H1 (cell line): ENCODE measurements at regions of chr3 and their contacts with region 1.

Region 1: GRCh38 chr3:40505599-40506462 is at the start of gene ZNF620:
- DNase-seq: peak; percentile 75 to 90
- H3K4me3 ChIP-seq: peak within 1 kb of the TSS; percentile 83 to 95 (median 88)
- H3K27ac ChIP-seq: peak within 1 kb of the TSS; percentile 73; the same call in 1 of the 2 replicates
- H3K4me1 ChIP-seq: no peaks in the 10 kb centered on the region; a peak in 2 of 7 replicates
- H3K27me3 ChIP-seq: no peaks in the 10 kb centered on the region
- CTCF ChIP-seq: peak; percentile 32 to 47 (median 45)
- EP300 ChIP-seq: 0 out of 3 replicates have a peak, but pooled peaks of 1 of the 2 experiments have one; percentile 50
- POLR2A ChIP-seq: peak; percentile 46 to 77; a peak in 2 of 3 replicates
- RAD21 ChIP-seq: peak; percentile 45 to 52
- total RNA-seq, gene ZNF620: 20.2 and 21.4 TPM in 2 replicates

Region 2: GRCh38 chr3:40329071-40329470 is 176.8 kb before region 1 on chr3:
- CTCF ChIA-PET with region 1: interaction called, 10 read pairs
- POLR2A ChIA-PET with region 1: interaction called, 4 read pairs
- DNase-seq: no peak
- H3K4me3 ChIP-seq: no peak overlapping the region
- H3K27ac ChIP-seq: no peak overlapping the region
- H3K4me1 ChIP-seq: peaks cover 0 to 16% (median 5%) of the 10 kb centered on the region in 4 experiments; a peak in 6 of 7 replicates
- H3K27me3 ChIP-seq: no peaks in the 10 kb centered on the region
- CTCF ChIP-seq: no peak
- EP300 ChIP-seq: no peak
- POLR2A ChIP-seq: no peak
- RAD21 ChIP-seq: no peak

Region 3: DNA sequence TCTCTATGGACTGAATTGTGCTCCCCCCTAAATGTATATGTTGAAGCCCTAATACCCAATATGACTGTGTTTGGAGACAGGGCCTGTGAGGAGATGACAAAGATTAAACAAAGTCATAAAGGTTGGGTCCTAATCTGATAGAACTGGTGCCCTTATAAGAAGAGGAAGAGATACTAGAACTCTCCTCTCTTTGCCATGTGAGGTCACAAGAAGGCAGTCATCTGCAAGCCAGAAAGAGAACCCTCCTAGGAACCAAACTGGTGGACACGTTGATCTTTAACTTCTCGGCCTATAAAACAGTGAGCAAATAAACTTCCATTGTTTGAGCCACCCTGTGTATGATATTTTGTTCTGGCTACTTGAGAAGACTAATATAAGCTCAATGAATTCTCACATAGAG is 150.4 kb before region 1 on chr3:
- CTCF ChIA-PET with region 1: no interaction called
- POLR2A ChIA-PET with region 1: no interaction called
- DNase-seq: no peak
- H3K4me3 ChIP-seq: no peak overlapping the region
- H3K27ac ChIP-seq: no peak overlapping the region
- H3K4me1 ChIP-seq: no peaks in the 10 kb centered on the region
- H3K27me3 ChIP-seq: peaks cover 0 to 1% (median 0%) of the 10 kb centered on the region in 4 experiments; a peak in 1 of 7 replicates
- CTCF ChIP-seq: no peak
- EP300 ChIP-seq: no peak
- POLR2A ChIP-seq: no peak
- RAD21 ChIP-seq: no peak

Region 4: GRCh38 chr3:40445062-40445461 is 60.8 kb before region 1 on chr3:
- CTCF ChIA-PET with region 1: no interaction called
- POLR2A ChIA-PET with region 1: no interaction called
- DNase-seq: no peak
- H3K4me3 ChIP-seq: no peak overlapping the region
- H3K27ac ChIP-seq: no peak overlapping the region
- H3K4me1 ChIP-seq: no peaks in the 10 kb centered on the region
- H3K27me3 ChIP-seq: no peaks in the 10 kb centered on the region
- CTCF ChIP-seq: no peak
- EP300 ChIP-seq: no peak
- POLR2A ChIP-seq: no peak
- RAD21 ChIP-seq: no peak

Region 5: DNA sequence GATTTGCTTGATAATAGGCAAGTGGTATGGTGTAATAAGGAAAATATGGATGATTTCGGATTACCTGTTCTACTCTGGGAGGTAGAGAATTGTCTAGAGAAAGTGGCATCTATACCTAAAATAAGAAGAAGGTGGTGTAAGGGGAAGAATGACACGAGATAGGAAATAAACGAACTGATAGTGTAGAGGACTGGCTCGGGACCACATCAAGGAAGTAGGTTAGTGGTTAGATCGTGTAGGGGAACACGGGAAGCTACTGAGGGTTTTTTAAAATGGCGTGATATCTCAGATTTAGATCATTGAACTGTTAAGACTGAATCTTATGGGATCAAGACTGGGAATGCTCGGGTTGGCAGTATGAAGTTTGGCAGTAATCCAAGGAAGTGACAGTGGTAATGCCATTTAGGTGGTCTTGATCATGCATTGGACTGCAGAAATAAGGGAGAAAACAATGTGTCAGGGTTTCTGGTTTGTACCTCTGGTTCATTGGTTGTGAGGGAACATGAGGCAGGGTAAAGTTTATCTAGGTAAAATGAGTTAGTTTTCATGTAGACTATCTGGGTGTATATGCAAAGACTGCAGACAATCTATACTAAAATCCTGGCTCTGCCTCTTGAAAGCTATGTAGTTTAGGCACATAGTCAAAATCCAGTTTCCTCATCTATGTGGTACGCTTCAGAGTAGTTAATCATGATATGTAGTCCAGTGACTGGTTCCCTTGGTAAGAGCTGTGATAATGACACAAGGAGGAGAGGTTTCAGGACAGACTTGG is 41.3 kb before region 1 on chr3:
- CTCF ChIA-PET with region 1: no interaction called
- POLR2A ChIA-PET with region 1: interaction called, 23 read pairs
- DNase-seq: no peak
- H3K4me3 ChIP-seq: no peak overlapping the region
- H3K27ac ChIP-seq: no peak overlapping the region
- H3K4me1 ChIP-seq: no peaks in the 10 kb centered on the region
- H3K27me3 ChIP-seq: no peaks in the 10 kb centered on the region
- CTCF ChIP-seq: no peak
- EP300 ChIP-seq: no peak
- POLR2A ChIP-seq: no peak; a peak in 2 of 3 replicates
- RAD21 ChIP-seq: no peak

Region 6: GRCh38 chr3:40476478-40477470 is 29.1 kb before region 1 on chr3 and contains the start of gene ZNF619:
- CTCF ChIA-PET with region 1: interaction called, 5 read pairs
- POLR2A ChIA-PET with region 1: interaction called, 11 read pairs
- DNase-seq: peak in 1 of 2 experiments; percentile 80
- H3K4me3 ChIP-seq: peak within 1 kb of the TSS; percentile 36 to 88 (median 64)
- H3K27ac ChIP-seq: peak within 1 kb of the TSS; percentile 67; the same call in 1 of the 2 replicates
- H3K4me1 ChIP-seq: peaks cover 0 to 8% (median 3%) of the 10 kb centered on the region in 4 experiments; a peak in 2 of 7 replicates
- H3K27me3 ChIP-seq: no peaks in the 10 kb centered on the region
- CTCF ChIP-seq: no peak
- EP300 ChIP-seq: no peak
- POLR2A ChIP-seq: peak in 1 of 2 experiments; percentile 60; a peak in 2 of 3 replicates
- RAD21 ChIP-seq: no peak
- total RNA-seq, gene ZNF619: 7.0 and 8.2 TPM in 2 replicates

Region 7: DNA sequence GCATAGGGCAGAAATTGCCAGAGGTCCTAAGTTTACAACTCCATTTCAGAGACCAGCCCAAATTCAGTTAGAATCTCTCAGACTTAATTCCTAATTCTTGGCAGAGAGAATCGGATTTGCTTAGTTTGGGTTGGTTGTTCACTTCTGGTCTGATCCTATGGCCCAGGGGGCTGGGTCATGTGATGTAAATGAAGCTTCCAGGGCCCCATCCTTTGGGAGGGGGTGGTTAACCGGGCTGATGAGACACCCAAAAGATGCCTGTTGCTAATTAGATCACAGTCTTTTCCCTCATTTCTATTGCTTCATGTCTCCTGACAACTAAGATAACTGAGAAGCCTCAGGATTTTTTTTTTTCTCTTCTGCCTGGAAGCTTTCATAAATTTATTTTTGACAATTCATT is 11.1 kb before region 1 on chr3:
- CTCF ChIA-PET with region 1: interaction called, 17 read pairs
- POLR2A ChIA-PET with region 1: interaction called, 16 read pairs
- DNase-seq: no peak
- H3K4me3 ChIP-seq: no peak overlapping the region
- H3K27ac ChIP-seq: no peak overlapping the region
- H3K4me1 ChIP-seq: no peaks in the 10 kb centered on the region
- H3K27me3 ChIP-seq: peaks cover 0 to 2% (median 0%) of the 10 kb centered on the region in 4 experiments; a peak in 1 of 7 replicates
- CTCF ChIP-seq: no peak
- EP300 ChIP-seq: no peak
- POLR2A ChIP-seq: no peak
- RAD21 ChIP-seq: no peak

Region 8: DNA sequence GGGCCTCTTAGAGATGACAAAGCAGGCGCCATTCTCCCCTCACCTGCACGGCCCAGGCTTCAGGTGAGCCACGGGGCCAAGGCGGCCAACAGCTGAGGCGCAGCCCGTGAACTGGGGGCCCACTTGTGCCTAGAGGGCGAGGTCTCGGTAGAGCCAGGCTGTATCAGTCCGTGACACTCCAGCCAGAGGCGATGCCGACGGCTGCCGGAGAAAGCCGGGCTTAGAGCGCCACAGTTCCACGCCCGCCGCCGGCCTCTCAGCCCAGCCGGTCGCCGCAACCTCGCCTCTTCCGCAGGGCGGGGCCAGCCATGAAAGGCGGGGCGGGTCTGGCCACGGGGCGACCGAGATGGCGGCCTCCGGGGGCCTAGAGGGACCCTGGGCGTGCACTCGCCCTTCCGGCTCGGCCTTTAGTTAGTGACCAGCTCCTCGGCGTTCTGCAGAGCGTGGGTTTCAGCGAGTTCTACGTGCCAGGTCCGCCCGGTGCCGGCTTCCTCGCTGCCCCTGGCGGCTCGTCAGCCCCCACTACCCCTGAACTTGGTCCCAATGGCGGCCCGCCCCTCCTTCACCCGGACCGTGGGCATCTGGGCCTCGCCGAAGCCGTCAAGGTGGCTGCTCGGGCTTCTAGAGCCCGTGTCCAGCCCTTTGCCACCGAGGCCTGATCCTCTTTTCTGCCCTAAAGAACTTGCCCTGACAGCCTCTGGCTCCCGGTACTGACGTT is 18.9 kb after region 1 on chr3 and contains the start of gene ZNF621:
- CTCF ChIA-PET with region 1: interaction called, 14 read pairs
- POLR2A ChIA-PET with region 1: interaction called, 78 read pairs
- DNase-seq: peak; percentile 39 to 94
- H3K4me3 ChIP-seq: peak within 1 kb of the TSS; percentile 83 to 85 (median 84)
- H3K27ac ChIP-seq: peak within 1 kb of the TSS; percentile 95
- H3K4me1 ChIP-seq: peaks cover 0 to 4% (median 0%) of the 10 kb centered on the region in 4 experiments; a peak in 2 of 7 replicates
- H3K27me3 ChIP-seq: no peaks in the 10 kb centered on the region
- CTCF ChIP-seq: no peak; a peak in 1 of 4 replicates
- EP300 ChIP-seq: no peak
- POLR2A ChIP-seq: peak; percentile 97 to 99
- RAD21 ChIP-seq: peak in 1 of 2 experiments; percentile 23; a peak in 1 of 4 replicates
- total RNA-seq, gene ZNF621: 15.4 and 15.8 TPM in 2 replicates